ENCODE measurements at regions of chr5 and their contacts with region 1.

Region 1: DNA sequence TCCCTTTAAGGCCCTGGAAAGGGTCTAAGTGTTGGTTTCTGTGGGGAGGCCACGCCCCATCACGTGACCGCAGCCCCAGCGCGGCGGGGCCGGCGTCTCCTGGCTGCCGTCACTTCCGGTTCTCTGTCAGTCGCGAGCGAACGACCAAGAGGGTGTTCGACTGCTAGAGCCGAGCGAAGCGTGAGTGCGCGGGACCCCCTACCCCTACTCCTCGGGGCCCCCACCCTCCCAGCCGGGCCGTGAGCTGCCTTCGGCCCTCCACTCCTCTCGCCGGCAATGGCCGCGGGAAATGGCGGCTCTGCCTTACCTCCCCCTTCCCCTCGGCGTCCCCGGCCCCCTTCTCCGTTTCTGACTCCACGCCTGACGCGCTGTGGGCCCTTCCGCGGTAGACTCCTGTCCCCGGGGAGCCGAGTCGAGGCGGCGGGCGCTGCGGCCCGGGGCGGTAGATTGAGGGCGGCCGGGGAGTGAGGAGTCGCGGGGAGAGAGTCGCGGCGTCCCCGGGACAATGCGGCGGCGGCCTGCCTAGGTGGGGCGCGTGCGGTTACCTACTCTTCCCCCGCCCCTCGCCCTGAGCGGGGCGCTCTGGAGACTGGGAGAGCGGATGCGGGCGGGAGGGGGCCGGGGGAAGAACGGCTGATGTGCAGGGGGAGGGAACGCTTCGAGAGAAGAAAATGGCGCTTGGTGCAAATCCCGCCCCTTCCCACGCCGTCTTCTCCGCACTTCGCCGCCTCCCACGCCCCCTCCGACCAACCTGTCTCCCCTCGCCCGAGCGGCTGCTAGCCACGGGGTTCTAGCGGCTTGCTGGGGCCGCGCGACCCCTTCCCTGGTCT is at the start of gene SUB1:
- DNase-seq: peak; percentile 94
- H3K4me3 Mint-ChIP-seq: peak within 1 kb of the TSS; percentile 99
- H3K27ac Mint-ChIP-seq: peak within 1 kb of the TSS; percentile 99
- H3K4me1 Mint-ChIP-seq: peaks cover 54% of the 10 kb centered on the region
- H3K27me3 Mint-ChIP-seq: no peaks in the 10 kb centered on the region
- total RNA-seq, gene SUB1: 397 to 400 TPM

Region 2: DNA sequence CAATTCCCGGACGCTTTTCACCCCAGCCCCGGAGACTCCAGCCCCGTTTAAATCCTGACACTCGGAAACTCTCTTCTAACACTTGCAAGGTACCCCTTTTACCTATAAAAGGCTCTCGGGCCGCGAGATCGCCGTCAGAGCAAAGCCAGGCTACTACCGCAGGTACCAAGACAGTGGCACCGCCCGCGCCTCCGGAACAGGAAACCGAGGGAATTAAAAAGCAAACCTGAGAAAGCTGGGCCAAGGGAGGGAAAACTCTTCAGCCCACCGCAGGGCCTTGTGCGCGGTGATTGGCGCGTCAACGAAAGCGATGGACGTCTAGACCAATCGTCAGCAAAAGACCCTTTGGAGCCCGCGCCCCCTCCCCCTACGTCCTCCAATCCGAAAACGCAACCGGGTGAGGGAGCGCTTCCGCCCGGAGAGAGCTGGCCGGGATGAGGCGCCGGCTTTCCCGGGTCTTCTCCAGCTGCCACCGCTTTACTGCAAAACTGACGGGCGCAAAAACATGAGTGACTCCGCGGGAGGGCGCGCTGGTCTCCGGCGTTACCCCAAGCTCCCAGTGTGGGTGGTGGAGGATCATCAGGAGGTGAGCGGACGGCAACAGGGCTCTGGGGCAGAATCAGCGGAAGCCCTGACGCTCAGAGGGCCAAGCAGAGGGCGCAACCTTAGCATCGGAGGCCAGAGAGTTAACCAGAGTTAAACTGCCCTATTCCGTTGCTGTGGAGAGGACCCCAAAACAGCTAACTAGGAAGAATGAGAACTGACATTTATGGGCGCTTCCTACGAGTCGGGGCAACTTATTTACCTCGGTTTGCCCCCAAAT is 1053.6 kb before region 1 on chr5 and contains the starts of genes C5orf22 and DROSHA:
- CTCF ChIA-PET with region 1: no interaction called
- intact Hi-C with region 1: loop called (anchors 5 kb)
- DNase-seq: peak; percentile 95
- H3K4me3 Mint-ChIP-seq: peak within 1 kb of the TSS; percentile 87
- H3K27ac Mint-ChIP-seq: peak within 1 kb of the TSS; percentile 80
- H3K4me1 Mint-ChIP-seq: peaks cover 41% of the 10 kb centered on the region
- H3K27me3 Mint-ChIP-seq: no peaks in the 10 kb centered on the region
- total RNA-seq, gene C5orf22: 23.7 to 25.5 TPM
- total RNA-seq, gene DROSHA: 60.7 to 60.9 TPM

Region 3: DNA sequence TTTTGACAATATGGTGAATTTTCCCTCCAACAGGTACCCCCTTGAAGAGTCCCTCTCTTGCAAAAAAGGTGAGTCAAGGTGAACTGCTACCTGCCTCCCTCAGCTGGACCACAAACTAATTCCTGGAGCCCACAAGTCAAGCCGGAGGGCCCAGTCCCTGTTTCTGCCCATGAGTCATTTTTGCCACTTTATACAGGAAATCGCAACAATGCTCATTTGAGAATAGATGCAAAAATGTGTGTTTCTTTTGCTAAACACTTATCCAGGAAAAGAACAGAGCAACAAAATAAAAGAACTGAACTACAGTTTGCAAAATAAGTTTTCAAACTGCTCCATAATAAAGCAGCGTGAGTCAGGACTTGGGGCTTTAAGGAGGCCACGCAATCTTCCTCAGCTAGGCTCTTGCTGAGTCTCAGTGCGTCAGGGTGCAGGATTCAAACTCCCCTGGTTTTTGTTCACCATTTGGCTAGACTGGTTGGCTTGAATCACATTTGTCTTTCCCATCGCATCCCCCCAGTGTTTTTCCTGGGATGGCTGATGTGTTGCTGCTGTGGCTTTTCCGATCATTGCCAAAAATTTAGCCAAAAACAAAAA is 514.2 kb before region 1 on chr5:
- CTCF ChIA-PET with region 1: no interaction called
- intact Hi-C with region 1: no loop called
- DNase-seq: no peak
- H3K4me3 Mint-ChIP-seq: no peak overlapping the region
- H3K27ac Mint-ChIP-seq: no peak overlapping the region
- H3K4me1 Mint-ChIP-seq: no peaks in the 10 kb centered on the region
- H3K27me3 Mint-ChIP-seq: no peaks in the 10 kb centered on the region

Region 4: DNA sequence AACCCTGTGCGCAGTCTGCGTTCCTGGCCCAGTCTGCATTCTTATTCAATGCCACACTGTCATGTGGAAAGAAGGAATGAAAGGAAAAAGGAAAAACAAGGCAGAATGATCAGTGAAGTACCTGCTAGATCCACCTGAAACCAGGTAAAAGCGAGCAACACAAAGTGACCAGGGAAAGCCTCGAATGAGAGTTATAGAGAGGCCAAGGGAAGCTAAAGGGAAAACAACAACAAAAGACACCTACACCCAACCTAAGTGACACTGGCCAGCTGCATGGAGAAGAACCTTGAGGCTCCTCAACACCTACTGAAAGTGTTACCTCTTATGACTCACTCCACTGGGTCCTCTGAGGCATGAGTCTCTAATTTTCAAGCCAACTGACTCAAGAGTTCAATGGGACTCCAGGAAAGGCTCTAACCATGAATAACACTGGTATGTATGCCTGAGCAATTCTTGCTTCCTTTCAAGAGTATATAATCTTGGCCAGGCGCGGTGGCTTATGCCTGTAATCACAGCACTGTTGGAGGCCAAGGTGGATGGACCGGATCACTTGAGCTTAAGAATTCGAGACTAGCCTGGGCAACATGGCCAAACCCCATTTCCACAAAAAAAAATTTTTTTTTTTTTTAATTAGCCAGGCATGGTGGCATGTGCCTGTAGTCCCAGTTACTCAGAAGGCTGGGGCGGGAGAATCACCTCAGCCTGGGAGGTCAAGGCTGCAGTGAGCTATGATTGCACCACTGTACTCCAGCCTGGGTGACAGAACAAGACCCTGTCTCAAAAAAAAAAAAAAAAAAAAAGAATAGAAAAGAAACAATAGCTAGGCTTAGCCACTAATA is 301.9 kb before region 1 on chr5:
- CTCF ChIA-PET with region 1: interaction called, 3 read pairs
- intact Hi-C with region 1: loop called (anchors 1 kb)
- DNase-seq: peak; percentile 46
- H3K4me3 Mint-ChIP-seq: no peak overlapping the region
- H3K27ac Mint-ChIP-seq: peak overlapping the region; percentile 37
- H3K4me1 Mint-ChIP-seq: peaks cover 41% of the 10 kb centered on the region
- H3K27me3 Mint-ChIP-seq: no peaks in the 10 kb centered on the region

Region 5: DNA sequence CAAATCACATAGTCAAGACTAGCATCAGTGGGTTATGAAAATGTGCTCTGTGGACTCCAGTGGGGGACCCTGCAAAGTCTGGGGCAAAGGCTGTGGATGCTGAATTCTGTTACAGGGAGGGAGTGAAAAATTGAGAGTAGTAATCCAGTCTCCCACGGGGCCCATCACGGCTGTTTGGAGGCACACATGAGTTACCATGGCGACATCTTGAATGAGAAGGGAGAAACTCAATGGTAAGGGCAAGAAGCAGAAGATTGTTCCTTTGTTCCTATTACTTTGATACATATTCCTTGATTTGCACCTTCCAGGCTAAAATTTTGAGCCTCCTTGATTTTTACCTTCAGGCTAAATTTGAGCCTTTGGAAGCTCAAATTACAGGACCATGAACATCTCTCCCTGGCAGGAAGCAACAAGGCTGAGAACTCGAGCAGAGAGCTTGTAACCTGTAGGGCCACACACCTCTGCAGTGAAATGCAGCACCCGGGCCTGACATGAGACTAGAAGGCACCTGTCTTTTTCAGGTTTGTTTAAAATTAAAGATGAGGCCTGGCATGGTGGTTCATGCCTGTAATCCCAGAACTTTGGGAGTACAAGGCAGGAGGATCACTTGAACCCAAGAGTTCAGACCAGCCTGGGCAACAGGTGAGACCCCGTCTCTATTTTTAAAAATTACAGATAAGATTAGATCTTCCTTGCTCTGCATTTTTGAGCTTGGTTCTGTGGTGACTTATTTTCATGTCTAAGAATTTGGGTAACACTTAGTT is 110.1 kb before region 1 on chr5:
- CTCF ChIA-PET with region 1: interaction called, 10 read pairs
- intact Hi-C with region 1: no loop called
- DNase-seq: no peak
- H3K4me3 Mint-ChIP-seq: no peak overlapping the region
- H3K27ac Mint-ChIP-seq: no peak overlapping the region
- H3K4me1 Mint-ChIP-seq: no peaks in the 10 kb centered on the region
- H3K27me3 Mint-ChIP-seq: no peaks in the 10 kb centered on the region

Region 6: GRCh38 chr5:32522429-32523143 is 63.1 kb before region 1 on chr5:
- CTCF ChIA-PET with region 1: interaction called, 25 read pairs
- intact Hi-C with region 1: no loop called
- DNase-seq: peak; percentile 57
- H3K4me3 Mint-ChIP-seq: no peak overlapping the region
- H3K27ac Mint-ChIP-seq: no peak overlapping the region
- H3K4me1 Mint-ChIP-seq: peaks cover 16% of the 10 kb centered on the region
- H3K27me3 Mint-ChIP-seq: no peaks in the 10 kb centered on the region

Region 7: GRCh38 chr5:32600057-32600622 is 14.5 kb after region 1 on chr5:
- CTCF ChIA-PET with region 1: interaction called, 30 read pairs
- intact Hi-C with region 1: loop called (anchors 1 kb)
- DNase-seq: no peak
- H3K4me3 Mint-ChIP-seq: no peak overlapping the region
- H3K27ac Mint-ChIP-seq: no peak overlapping the region
- H3K4me1 Mint-ChIP-seq: peaks cover 47% of the 10 kb centered on the region
- H3K27me3 Mint-ChIP-seq: no peaks in the 10 kb centered on the region

Measured in activated naive CD4-positive, alpha-beta T cell treated with anti-CD3 and anti-CD28 coated beads for 36 hours (primary cell).